ENCODE measurements at regions of chr7 and their contacts with region 1.

Region 1: GRCh38 chr7:124263232-124263827 is 230.5 kb upstream of the TMEM229A start:
- DNase-seq: peak; percentile 69
- ATAC-seq: peak; percentile 86
- H3K4me3 Mint-ChIP-seq: no peak overlapping the region
- H3K27ac Mint-ChIP-seq: no peak overlapping the region
- H3K4me1 Mint-ChIP-seq: peaks cover 40% of the 10 kb centered on the region
- H3K27me3 Mint-ChIP-seq: peaks cover 11% of the 10 kb centered on the region
- CTCF ChIP-seq: no peak

Region 2: GRCh38 chr7:124276019-124276622 is 12.8 kb after region 1 on chr7:
- CTCF ChIA-PET with region 1: interaction called, 13 read pairs
- POLR2A ChIA-PET with region 1: no interaction called
- DNase-seq: peak; percentile 68
- ATAC-seq: peak; percentile 100
- H3K4me3 Mint-ChIP-seq: no peak overlapping the region
- H3K27ac Mint-ChIP-seq: peak overlapping the region; percentile 24; the same call in 1 of the 2 replicates
- H3K4me1 Mint-ChIP-seq: peaks cover 13% of the 10 kb centered on the region
- H3K27me3 Mint-ChIP-seq: no peaks in the 10 kb centered on the region
- CTCF ChIP-seq: peak; percentile 71